Aorta (tissue), 5 donors: ENCODE measurements at regions of chr2 and their contacts with region 1.

Region 1: DNA sequence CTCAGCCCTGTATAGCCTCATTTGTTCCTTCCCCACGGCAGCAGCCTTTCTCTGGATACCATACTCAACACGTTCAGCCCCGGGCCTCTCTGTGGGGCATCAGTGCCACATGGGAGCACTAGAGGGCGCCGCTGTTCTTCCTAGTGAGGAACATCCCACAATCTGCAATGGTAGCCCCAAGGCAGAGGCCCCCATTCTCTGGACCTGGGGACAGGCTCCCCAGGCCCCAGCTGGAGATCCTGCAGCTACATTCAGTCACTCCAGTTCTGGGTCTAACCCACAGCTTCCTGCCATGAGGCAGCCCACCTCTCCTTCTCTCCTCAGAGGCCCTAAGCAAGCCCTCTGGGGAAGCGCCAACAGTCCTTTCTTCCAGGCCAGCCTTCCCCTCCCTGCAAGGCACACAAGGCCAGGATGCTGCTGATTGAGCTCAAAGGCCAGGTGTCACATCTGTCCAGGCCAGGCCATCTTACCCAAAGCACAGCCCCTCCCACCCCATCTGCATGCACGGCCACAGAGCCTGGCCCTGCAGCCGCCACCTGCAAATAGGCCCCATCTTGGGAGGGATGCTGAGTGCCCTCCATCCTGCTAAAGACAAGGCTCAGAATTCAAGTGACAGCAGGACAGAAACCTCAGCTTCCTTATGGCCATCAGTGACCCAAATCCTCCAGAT is 14.3 kb upstream of the SFXN5 start:
- DNase-seq: peak; percentile 88 to 96
- ATAC-seq: peak; percentile 78
- H3K4me3 ChIP-seq: no peak overlapping the region
- H3K27ac ChIP-seq: no peak overlapping the region
- H3K4me1 ChIP-seq: peaks cover 2 to 4% of the 10 kb centered on the region in 2 donors
- H3K27me3 ChIP-seq: no peaks in the 10 kb centered on the region

Region 2: DNA sequence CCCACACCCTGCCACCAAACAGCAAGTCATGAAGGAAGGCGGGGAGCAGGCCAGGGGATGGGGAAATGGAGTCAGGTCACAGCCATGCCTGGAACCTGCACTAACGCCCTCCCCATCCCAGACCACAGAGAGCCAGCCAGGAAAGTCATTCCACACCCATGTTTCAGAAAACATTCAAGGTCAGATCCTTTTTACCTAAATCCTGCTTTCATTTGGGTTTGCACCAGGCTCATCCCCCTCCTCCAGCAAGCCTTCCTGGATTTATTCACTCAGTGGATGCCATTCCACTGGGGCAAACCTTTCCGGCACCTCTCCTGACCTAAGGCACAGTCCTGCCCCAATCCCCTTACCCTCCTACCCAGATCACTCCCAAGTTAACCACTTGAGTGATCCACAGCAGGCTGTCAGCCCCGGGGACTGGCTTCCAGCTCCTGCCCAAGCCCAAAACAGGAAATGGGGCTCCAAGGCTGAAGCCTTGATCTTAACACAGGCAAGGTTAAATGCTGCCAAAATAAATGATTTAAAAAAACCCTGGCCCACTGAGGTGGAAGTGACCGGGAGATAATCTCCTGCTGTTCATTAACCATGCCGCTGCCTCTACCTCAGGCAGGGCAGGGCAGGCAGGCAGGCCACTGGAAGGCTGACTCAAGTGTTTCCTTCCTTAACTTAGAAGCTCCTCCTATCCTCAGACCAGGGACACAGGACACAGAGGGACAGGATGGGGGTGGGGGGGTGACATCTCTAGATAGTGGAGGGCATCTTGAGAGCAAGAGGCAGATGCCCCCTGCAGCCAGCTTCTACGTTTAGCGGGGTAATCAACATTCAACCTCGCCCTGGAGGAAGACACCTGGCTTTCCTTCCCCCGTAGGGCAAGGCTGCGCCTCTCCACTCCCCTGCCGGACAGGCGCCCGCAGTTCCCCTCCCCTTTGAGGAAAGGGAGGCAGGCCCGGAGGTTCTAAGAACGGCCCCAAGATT is 25.5 kb after region 1 on chr2:
- intact Hi-C with region 1: loop called in 1 of 2 experiments (anchors 2 kb)
- DNase-seq: peak; percentile 53 to 76
- ATAC-seq: no peak
- H3K4me3 ChIP-seq: peak overlapping the region; percentile 80 to 99
- H3K27ac ChIP-seq: peak overlapping the region in 1 of 2 donors; percentile 92
- H3K4me1 ChIP-seq: no peaks in the 10 kb centered on the region
- H3K27me3 ChIP-seq: no peaks in the 10 kb centered on the region

Region 3: GRCh38 chr2:73156539-73157124 is 70.8 kb after region 1 on chr2:
- intact Hi-C with region 1: loop called in 1 of 2 experiments (anchors 1 kb)
- DNase-seq: peak; percentile 78 to 91
- ATAC-seq: peak; percentile 91
- H3K4me3 ChIP-seq: no peak overlapping the region
- H3K27ac ChIP-seq: no peak overlapping the region
- H3K4me1 ChIP-seq: no peaks in the 10 kb centered on the region
- H3K27me3 ChIP-seq: no peaks in the 10 kb centered on the region

Region 4: GRCh38 chr2:73176881-73177644 is 91.2 kb after region 1 on chr2:
- intact Hi-C with region 1: loop called in 1 of 2 experiments (anchors 1 kb)
- DNase-seq: peak; percentile 94 to 98
- ATAC-seq: peak; percentile 97
- H3K4me3 ChIP-seq: peak overlapping the region; percentile 2 to 8
- H3K27ac ChIP-seq: peak overlapping the region in 1 of 2 donors; percentile 28
- H3K4me1 ChIP-seq: no peaks in the 10 kb centered on the region
- H3K27me3 ChIP-seq: no peaks in the 10 kb centered on the region